ENCODE measurements at regions of chr1 and their contacts with region 1.

Region 1: GRCh38 chr1:9910425-9911178 is 533 bp upstream of the CTNNBIP1 start:
- DNase-seq: peak; percentile 98
- ATAC-seq: peak; percentile 97
- H3K4me3 ChIP-seq: peak overlapping the region; percentile 70
- H3K27ac ChIP-seq: peak overlapping the region; percentile 52
- H3K4me1 ChIP-seq: peaks cover 13% of the 10 kb centered on the region
- H3K27me3 ChIP-seq: no peaks in the 10 kb centered on the region
- CTCF ChIP-seq: no peak

Region 2: DNA sequence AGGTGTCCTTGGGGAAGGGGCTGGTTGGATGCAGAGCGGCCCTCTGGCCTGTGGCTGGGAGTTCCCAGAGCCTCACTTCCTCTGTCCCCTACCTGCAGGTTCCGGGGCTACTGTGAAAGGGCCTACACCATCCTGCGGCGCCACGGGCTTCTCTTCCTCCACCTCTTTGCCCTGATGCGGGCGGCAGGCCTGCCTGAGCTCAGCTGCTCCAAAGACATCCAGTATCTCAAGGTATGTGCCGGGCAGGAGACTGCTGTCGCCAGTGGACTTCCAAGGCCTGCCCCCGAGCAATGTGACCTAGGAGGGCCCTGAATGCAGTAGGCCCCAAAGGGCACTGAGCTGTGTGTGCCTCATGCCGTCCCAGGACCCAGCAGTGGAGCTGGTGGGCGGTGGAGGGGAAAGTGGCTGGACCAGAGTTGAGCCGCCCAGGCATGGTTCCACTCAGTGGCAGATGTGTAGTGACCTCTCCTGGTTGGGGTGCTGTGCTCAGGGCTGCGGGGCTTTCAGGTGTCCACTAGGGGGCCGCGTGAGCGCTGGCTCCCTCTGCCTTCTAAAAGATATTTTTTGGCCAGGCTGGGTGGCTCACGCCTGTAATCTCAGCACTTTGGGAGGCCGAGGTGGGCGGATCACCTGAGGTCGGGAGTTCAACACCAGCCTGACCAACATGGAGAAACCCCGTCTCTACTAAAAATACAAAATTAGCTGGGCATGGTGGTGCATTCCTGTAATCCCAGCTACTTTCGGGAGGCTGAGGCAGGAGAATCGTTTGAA is 185.7 kb before region 1 on chr1:
- CTCF ChIA-PET with region 1: no interaction called
- POLR2A ChIA-PET with region 1: no interaction called
- intact Hi-C with region 1: no loop called
- DNase-seq: peak; percentile 74
- ATAC-seq: peak; percentile 93
- H3K4me3 ChIP-seq: no peak overlapping the region
- H3K27ac ChIP-seq: no peak overlapping the region
- H3K4me1 ChIP-seq: no peaks in the 10 kb centered on the region
- H3K27me3 ChIP-seq: no peaks in the 10 kb centered on the region
- CTCF ChIP-seq: peak; percentile 89

Region 3: GRCh38 chr1:9746211-9746610 is 164.4 kb before region 1 on chr1:
- CTCF ChIA-PET with region 1: no interaction called
- POLR2A ChIA-PET with region 1: no interaction called
- intact Hi-C with region 1: no loop called
- DNase-seq: no peak
- ATAC-seq: no peak
- H3K4me3 ChIP-seq: no peak overlapping the region
- H3K27ac ChIP-seq: no peak overlapping the region
- H3K4me1 ChIP-seq: no peaks in the 10 kb centered on the region
- H3K27me3 ChIP-seq: no peaks in the 10 kb centered on the region
- CTCF ChIP-seq: no peak

Region 4: DNA sequence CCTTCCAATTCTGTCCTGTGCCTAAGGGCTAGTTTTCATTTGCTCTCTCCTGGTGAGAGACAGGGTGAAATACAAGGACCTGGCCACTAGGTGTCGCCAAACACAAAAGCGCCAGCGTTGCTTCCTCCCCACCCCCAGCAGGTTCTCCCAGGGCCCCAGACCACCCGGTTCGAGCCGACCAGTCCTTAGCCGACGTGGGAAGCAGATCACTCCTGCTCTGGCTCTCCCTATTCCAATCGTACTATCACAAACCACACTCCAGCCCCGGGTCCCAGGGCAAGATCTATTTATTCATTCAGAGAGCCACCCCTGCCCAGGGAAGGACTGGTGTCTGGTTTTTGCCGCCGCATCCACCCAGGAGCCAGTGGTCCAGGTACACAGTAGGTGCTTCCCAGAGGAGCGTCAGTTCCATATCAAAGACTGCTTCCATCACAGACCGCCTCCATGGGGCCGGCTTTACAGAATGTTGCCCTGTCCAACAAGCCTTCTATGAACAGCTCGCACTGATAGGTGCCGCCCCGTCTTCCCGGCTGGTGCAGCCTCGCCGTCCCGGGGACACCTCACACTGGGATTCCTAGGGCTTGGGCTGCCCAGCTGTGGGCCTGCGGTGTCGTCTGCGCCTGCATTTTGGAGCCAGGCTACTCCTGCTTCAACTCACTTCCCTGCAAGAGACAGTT is 35.5 kb before region 1 on chr1:
- CTCF ChIA-PET with region 1: interaction called, 11 read pairs
- POLR2A ChIA-PET with region 1: interaction called, 3 read pairs
- intact Hi-C with region 1: loop called (anchors 1 kb)
- DNase-seq: peak; percentile 81
- ATAC-seq: peak; percentile 49
- H3K4me3 ChIP-seq: no peak overlapping the region
- H3K27ac ChIP-seq: no peak overlapping the region
- H3K4me1 ChIP-seq: peaks cover 30% of the 10 kb centered on the region
- H3K27me3 ChIP-seq: no peaks in the 10 kb centered on the region
- CTCF ChIP-seq: peak; percentile 95

Region 5: GRCh38 chr1:9890224-9890731 is 20.3 kb before region 1 on chr1:
- CTCF ChIA-PET with region 1: interaction called, 5 read pairs
- POLR2A ChIA-PET with region 1: interaction called, 22 read pairs
- intact Hi-C with region 1: loop called (anchors 2 kb)
- DNase-seq: peak; percentile 94
- ATAC-seq: peak; percentile 53
- H3K4me3 ChIP-seq: no peak overlapping the region; the same call in 1 of the 2 replicates
- H3K27ac ChIP-seq: peak overlapping the region; percentile 99
- H3K4me1 ChIP-seq: peaks cover 56% of the 10 kb centered on the region
- H3K27me3 ChIP-seq: no peaks in the 10 kb centered on the region
- CTCF ChIP-seq: no peak

Region 6: GRCh38 chr1:9929431-9930385 is 19.1 kb after region 1 on chr1:
- CTCF ChIA-PET with region 1: no interaction called
- POLR2A ChIA-PET with region 1: no interaction called
- intact Hi-C with region 1: no loop called
- DNase-seq: no peak
- ATAC-seq: no peak
- H3K4me3 ChIP-seq: no peak overlapping the region
- H3K27ac ChIP-seq: no peak overlapping the region
- H3K4me1 ChIP-seq: no peaks in the 10 kb centered on the region
- H3K27me3 ChIP-seq: no peaks in the 10 kb centered on the region
- CTCF ChIP-seq: no peak

Region 7: DNA sequence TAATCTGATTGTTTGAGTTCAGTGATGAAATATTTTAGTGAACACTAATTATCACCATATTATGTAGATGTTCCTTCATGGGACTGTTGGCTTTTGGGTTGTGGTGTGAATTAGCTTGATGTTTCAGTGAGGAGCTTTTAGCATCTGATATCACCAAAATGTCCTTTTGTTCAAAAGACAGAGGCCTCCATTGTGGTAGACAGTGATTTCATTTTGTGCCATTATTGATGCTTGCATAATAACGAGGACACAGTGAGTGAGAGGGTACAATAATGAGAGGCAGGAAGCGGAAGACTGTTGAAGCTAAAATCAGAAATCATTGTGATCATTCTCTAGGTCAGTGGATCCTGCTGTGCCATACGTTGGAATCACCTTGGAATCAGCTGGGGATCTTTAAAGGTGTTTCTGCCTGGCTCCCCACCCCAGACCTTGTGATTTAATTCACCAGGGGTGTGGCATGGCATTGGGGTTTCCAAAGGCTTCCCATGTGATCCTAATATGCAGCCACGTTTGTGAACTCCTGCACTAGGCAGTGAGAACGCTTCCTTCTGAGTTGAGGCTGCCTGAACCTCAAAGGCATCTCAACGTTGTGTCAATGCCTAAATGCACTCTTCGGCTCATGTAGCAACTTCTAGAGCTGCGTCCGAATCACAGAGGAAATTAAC is 217.6 kb after region 1 on chr1:
- CTCF ChIA-PET with region 1: no interaction called
- POLR2A ChIA-PET with region 1: interaction called, 21 read pairs
- intact Hi-C with region 1: no loop called
- DNase-seq: no peak
- ATAC-seq: no peak
- H3K4me3 ChIP-seq: no peak overlapping the region
- H3K27ac ChIP-seq: no peak overlapping the region
- H3K4me1 ChIP-seq: no peaks in the 10 kb centered on the region
- H3K27me3 ChIP-seq: no peaks in the 10 kb centered on the region
- CTCF ChIP-seq: no peak